HepG2 (cell line): ENCODE measurements at regions of chr14 and their contacts with region 1.

Region 1: GRCh38 chr14:24425704-24426103 is 3.8 kb downstream of the CBLN3 start:
- DNase-seq: peak; percentile 63
- ATAC-seq: no peak
- H3K4me3 ChIP-seq: no peak overlapping the region
- H3K27ac ChIP-seq: no peak overlapping the region
- H3K4me1 ChIP-seq: peaks cover 74% of the 10 kb centered on the region
- H3K27me3 ChIP-seq: no peaks in the 10 kb centered on the region; a peak in 2 of 5 replicates
- CTCF ChIP-seq: no peak
- EP300 ChIP-seq: no peak
- POLR2A ChIP-seq: no peak
- RAD21 ChIP-seq: no peak

Region 2: GRCh38 chr14:24366721-24367513 is 58.8 kb before region 1 on chr14:
- CTCF ChIA-PET with region 1: interaction called, 295 read pairs
- POLR2A ChIA-PET with region 1: interaction called, 90 read pairs
- in situ Hi-C with region 1: loop called (anchors 5 kb)
- intact Hi-C with region 1: no loop called
- DNase-seq: peak; percentile 92
- ATAC-seq: peak; percentile 83
- H3K4me3 ChIP-seq: peak overlapping the region; percentile 71 to 80 (median 74)
- H3K27ac ChIP-seq: no peak overlapping the region
- H3K4me1 ChIP-seq: peaks cover 26% of the 10 kb centered on the region
- H3K27me3 ChIP-seq: peaks cover 20 to 54% of the 10 kb centered on the region in 2 experiments
- CTCF ChIP-seq: no peak; the same call in 1 of the 2 replicates
- EP300 ChIP-seq: peak in 1 of 2 experiments; percentile 29; a peak in 1 of 4 replicates
- POLR2A ChIP-seq: no peak
- RAD21 ChIP-seq: no peak

Region 3: DNA sequence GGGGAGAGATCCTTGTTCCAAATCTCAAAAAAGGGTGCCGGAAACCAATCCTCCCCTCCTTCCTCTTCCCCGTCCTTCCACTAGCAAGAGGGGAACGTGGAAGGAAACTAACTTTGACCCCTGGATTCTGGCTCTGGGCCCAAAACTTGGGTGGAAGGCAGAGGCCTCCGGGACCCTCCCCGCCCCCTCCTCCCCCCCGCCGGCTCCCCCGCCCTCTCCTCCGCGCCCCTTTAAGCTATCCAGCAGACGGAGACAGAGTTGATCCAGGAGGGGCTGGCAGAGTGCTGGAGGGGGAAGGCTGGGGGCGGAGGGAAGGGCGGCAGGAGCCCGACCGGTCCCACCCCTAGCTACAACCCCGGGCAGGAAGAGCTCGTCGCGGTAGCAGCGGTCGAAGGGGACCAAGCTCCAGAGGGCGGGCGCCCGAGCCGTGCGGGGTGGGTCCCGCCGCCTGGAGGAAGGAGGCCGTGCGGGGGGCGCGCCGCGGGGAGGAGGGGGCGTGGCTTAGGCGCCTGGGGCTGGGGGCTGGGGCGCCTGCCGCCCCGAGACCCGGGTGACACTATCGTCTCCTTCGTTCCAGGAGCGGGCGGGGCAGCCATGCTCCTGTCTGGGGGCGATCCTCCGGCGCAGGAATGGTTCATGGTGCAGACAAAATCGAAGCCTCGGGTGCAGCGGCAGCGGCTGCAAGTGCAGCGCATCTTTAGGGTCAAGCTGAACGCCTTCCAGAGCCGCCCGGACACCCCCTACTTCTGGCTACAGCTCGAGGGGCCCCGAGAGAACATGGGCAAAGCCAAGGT is 26.9 kb before region 1 on chr14 and contains the start of gene NYNRIN:
- CTCF ChIA-PET with region 1: no interaction called
- POLR2A ChIA-PET with region 1: interaction called, 17 read pairs
- in situ Hi-C with region 1: no loop called
- intact Hi-C with region 1: loop called (anchors 2 kb)
- DNase-seq: no peak
- ATAC-seq: peak; percentile 78
- H3K4me3 ChIP-seq: peak within 1 kb of the TSS; percentile 54 to 74 (median 62)
- H3K27ac ChIP-seq: no peak within 1 kb of the TSS
- H3K4me1 ChIP-seq: peaks cover 43% of the 10 kb centered on the region
- H3K27me3 ChIP-seq: peaks cover 15 to 58% of the 10 kb centered on the region in 2 experiments
- CTCF ChIP-seq: 0 out of 2 replicates have a peak, but pooled peaks have one; percentile 5
- EP300 ChIP-seq: no peak
- POLR2A ChIP-seq: no peak
- RAD21 ChIP-seq: no peak
- total RNA-seq, gene NYNRIN: 1.1 and 1.3 TPM in 2 replicates

Region 4: DNA sequence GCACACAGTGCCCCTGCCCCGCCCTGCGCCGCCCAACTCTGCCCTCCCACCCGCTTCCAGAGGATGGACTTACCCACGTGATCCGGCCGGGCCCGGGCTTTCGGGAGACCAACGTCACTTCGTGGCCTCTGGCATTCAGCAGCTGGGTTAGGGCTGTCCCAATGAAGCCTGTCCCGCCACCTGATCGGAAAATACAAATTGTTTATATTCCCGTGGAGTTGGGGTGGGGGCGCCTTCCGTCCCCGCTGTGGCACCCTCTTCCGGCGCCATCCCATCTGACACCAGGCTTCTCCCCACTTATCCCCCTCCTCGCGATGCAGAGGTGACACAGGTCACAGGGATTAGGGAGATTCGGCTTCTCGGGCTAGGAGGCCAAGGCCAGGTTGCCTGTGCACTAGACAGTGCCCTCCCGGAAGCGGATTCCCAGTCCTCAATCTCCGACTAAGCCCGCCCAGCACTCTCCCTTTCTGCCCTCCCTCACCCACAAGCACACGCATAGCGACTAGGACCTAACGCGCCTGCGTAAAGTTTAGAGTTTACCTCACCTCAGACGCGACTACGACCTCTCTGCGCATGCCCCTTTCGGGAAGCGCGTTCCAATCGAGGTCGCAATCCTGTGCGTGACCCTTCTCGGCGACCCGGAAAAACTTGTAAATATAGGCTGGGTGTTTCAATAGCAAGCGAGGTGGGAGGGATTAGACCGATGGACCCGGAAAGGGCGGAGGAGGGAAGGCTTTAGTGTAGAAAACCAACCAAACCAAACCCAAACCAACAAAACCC is 16.8 kb after region 1 on chr14 and contains the start of gene SDR39U1:
- CTCF ChIA-PET with region 1: no interaction called
- POLR2A ChIA-PET with region 1: interaction called, 242 read pairs
- in situ Hi-C with region 1: no loop called
- intact Hi-C with region 1: loop called (anchors 2 kb)
- DNase-seq: peak; percentile 100
- ATAC-seq: peak; percentile 91
- H3K4me3 ChIP-seq: peak within 1 kb of the TSS; percentile 74 to 98 (median 84)
- H3K27ac ChIP-seq: peak within 1 kb of the TSS; percentile 93
- H3K4me1 ChIP-seq: peaks cover 18% of the 10 kb centered on the region
- H3K27me3 ChIP-seq: peaks cover 0 to 5% of the 10 kb centered on the region in 2 experiments; a peak in 1 of 5 replicates
- CTCF ChIP-seq: peak; percentile 50
- EP300 ChIP-seq: 0 out of 4 replicates have a peak, but pooled peaks have one; percentile 44 to 47
- POLR2A ChIP-seq: peak in 1 of 2 experiments; percentile 98; a peak in 2 of 4 replicates
- RAD21 ChIP-seq: no peak; the same call in 1 of the 2 replicates
- total RNA-seq, gene SDR39U1: 25.0 and 34.4 TPM in 2 replicates

Region 5: GRCh38 chr14:24473211-24473610 is 47.5 kb after region 1 on chr14:
- CTCF ChIA-PET with region 1: no interaction called
- POLR2A ChIA-PET with region 1: no interaction called
- in situ Hi-C with region 1: no loop called
- intact Hi-C with region 1: no loop called
- DNase-seq: no peak
- ATAC-seq: no peak; the same call in 2 of the 3 replicates
- H3K4me3 ChIP-seq: no peak overlapping the region
- H3K27ac ChIP-seq: no peak overlapping the region
- H3K4me1 ChIP-seq: no peaks in the 10 kb centered on the region
- H3K27me3 ChIP-seq: no peaks in the 10 kb centered on the region
- CTCF ChIP-seq: no peak
- EP300 ChIP-seq: no peak
- POLR2A ChIP-seq: no peak
- RAD21 ChIP-seq: no peak